MCF 10A (cell line): ENCODE measurements at regions of chr1 and their contacts with region 1.

Region 1: DNA sequence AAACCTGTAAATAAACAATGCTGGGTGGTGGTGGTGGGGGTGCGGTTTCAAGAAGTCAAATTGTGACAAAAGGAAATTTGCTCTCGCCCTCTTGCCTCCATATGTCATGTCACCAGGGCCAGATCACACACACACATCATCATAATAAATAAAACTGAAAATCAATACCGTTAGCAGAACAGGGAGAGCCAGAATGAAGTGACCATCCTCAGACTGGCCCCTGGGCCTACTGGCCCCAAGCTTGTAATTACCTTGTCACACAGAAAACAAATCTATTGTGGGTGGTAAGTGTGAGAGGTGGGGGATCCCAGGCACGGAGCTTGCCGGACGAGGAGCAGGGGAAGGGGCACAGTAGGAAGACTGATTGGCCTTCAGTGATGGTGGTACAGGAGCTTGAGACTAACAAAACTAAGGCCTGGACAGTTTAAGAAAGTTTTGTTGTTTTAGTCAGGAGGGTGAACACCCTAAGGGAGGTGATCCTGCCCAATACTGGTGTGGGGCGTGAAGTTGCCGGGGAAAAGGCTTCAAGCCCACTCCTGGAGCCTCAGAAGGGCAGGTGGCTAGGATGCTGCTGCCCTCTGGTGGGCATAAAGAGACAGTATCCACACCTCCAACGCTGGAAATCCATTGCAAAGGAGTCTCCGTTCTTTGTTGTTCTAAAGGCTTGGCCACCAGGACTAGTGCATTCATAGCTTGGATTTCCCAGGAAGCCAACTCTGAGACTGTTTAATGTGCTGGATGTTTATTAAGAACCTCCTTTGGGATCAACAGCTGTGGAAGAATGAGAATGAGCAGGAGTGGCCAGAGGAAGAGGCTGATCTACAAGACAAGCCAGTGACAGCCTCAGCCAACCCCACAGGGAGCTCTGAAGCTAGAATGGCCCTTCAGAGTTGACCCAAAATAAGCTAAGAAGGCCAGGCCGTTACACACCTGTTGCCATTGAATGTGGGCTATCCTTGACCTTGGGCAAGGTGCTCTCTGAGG is 8.1 kb upstream of the C1orf216 start:
- DNase-seq: peak; percentile 60
- H3K4me3 Mint-ChIP-seq: no peak overlapping the region
- H3K27ac Mint-ChIP-seq: no peak overlapping the region
- H3K4me1 Mint-ChIP-seq: no peaks in the 10 kb centered on the region
- H3K27me3 Mint-ChIP-seq: no peaks in the 10 kb centered on the region
- CTCF ChIP-seq: peak; percentile 86

Region 2: GRCh38 chr1:35202048-35202719 is 524.6 kb before region 1 on chr1:
- CTCF ChIA-PET with region 1: interaction called, 3 read pairs
- POLR2A ChIA-PET with region 1: no interaction called
- intact Hi-C with region 1: loop called (anchors 5 kb)
- DNase-seq: peak; percentile 84
- H3K4me3 Mint-ChIP-seq: no peak overlapping the region
- H3K27ac Mint-ChIP-seq: no peak overlapping the region
- H3K4me1 Mint-ChIP-seq: no peaks in the 10 kb centered on the region
- H3K27me3 Mint-ChIP-seq: no peaks in the 10 kb centered on the region
- CTCF ChIP-seq: peak; percentile 86

Region 3: GRCh38 chr1:35451125-35451528 is 275.6 kb before region 1 on chr1:
- CTCF ChIA-PET with region 1: interaction called, 80 read pairs
- POLR2A ChIA-PET with region 1: interaction called, 3 read pairs
- intact Hi-C with region 1: no loop called
- DNase-seq: peak; percentile 82
- H3K4me3 Mint-ChIP-seq: peak overlapping the region; percentile 0
- H3K27ac Mint-ChIP-seq: no peak overlapping the region
- H3K4me1 Mint-ChIP-seq: peaks cover 19% of the 10 kb centered on the region
- H3K27me3 Mint-ChIP-seq: no peaks in the 10 kb centered on the region
- CTCF ChIP-seq: peak; percentile 83

Region 4: DNA sequence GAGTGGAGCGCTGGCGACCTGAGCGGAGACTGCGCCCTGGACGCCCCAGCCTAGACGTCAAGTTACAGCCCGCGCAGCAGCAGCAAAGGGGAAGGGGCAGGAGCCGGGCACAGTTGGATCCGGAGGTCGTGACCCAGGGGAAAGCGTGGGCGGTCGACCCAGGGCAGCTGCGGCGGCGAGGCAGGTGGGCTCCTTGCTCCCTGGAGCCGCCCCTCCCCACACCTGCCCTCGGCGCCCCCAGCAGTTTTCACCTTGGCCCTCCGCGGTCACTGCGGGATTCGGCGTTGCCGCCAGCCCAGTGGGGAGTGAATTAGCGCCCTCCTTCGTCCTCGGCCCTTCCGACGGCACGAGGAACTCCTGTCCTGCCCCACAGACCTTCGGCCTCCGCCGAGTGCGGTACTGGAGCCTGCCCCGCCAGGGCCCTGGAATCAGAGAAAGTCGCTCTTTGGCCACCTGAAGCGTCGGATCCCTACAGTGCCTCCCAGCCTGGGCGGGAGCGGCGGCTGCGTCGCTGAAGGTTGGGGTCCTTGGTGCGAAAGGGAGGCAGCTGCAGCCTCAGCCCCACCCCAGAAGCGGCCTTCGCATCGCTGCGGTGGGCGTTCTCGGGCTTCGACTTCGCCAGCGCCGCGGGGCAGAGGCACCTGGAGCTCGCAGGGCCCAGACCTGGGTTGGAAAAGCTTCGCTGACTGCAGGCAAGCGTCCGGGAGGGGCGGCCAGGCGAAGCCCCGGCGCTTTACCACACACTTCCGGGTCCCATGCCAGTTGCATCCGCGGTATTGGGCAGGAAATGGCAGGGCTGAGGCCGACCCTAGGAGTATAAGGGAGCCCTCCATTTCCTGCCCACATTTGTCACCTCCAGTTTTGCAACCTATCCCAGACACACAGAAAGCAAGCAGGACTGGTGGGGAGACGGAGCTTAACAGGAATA is 149.4 kb before region 1 on chr1:
- CTCF ChIA-PET with region 1: interaction called, 38 read pairs
- POLR2A ChIA-PET with region 1: no interaction called
- intact Hi-C with region 1: no loop called
- DNase-seq: no peak
- H3K4me3 Mint-ChIP-seq: no peak overlapping the region
- H3K27ac Mint-ChIP-seq: no peak overlapping the region
- H3K4me1 Mint-ChIP-seq: peaks cover 11% of the 10 kb centered on the region
- H3K27me3 Mint-ChIP-seq: peaks cover 4% of the 10 kb centered on the region
- CTCF ChIP-seq: no peak

Region 5: GRCh38 chr1:35641233-35641866 is 85.4 kb before region 1 on chr1 and contains the start of gene PSMB2:
- CTCF ChIA-PET with region 1: interaction called, 14 read pairs
- POLR2A ChIA-PET with region 1: interaction called, 5 read pairs
- intact Hi-C with region 1: no loop called
- DNase-seq: peak; percentile 96
- H3K4me3 Mint-ChIP-seq: peak within 1 kb of the TSS; percentile 99
- H3K27ac Mint-ChIP-seq: peak within 1 kb of the TSS; percentile 100
- H3K4me1 Mint-ChIP-seq: peaks cover 7% of the 10 kb centered on the region
- H3K27me3 Mint-ChIP-seq: peaks cover 12% of the 10 kb centered on the region
- CTCF ChIP-seq: no peak
- total RNA-seq, gene PSMB2: 82.6 and 93.9 TPM in 2 replicates

Region 6: DNA sequence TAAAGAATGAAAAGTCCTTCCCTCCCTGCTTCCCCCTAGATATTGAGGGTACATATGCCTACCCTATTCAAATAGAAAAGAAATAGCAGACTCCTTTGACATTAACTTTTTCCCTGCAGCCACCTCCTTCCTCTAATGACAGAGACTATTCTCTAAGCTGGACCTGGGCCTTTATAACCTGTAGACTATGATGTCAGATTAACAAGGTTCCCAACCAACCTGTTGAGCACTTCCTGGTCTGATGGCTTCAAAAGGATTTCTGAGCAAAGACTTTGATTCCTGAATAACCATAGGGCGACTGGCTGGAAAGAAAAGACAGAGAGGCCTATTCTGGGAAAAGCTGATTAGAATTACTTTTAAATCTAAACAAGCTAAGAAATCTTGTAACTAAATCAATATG is 10.4 kb after region 1 on chr1:
- CTCF ChIA-PET with region 1: interaction called, 68 read pairs
- POLR2A ChIA-PET with region 1: no interaction called
- intact Hi-C with region 1: no loop called
- DNase-seq: no peak
- H3K4me3 Mint-ChIP-seq: no peak overlapping the region
- H3K27ac Mint-ChIP-seq: no peak overlapping the region
- H3K4me1 Mint-ChIP-seq: no peaks in the 10 kb centered on the region
- H3K27me3 Mint-ChIP-seq: no peaks in the 10 kb centered on the region
- CTCF ChIP-seq: no peak

Region 7: GRCh38 chr1:35753626-35754260 is 27.0 kb after region 1 on chr1:
- CTCF ChIA-PET with region 1: interaction called, 59 read pairs
- POLR2A ChIA-PET with region 1: no interaction called
- intact Hi-C with region 1: no loop called
- DNase-seq: no peak
- H3K4me3 Mint-ChIP-seq: no peak overlapping the region
- H3K27ac Mint-ChIP-seq: no peak overlapping the region
- H3K4me1 Mint-ChIP-seq: no peaks in the 10 kb centered on the region
- H3K27me3 Mint-ChIP-seq: no peaks in the 10 kb centered on the region
- CTCF ChIP-seq: no peak

Region 8: GRCh38 chr1:35832276-35832905 is 105.6 kb after region 1 on chr1:
- CTCF ChIA-PET with region 1: no interaction called
- POLR2A ChIA-PET with region 1: no interaction called
- intact Hi-C with region 1: no loop called
- DNase-seq: no peak
- H3K4me3 Mint-ChIP-seq: no peak overlapping the region
- H3K27ac Mint-ChIP-seq: no peak overlapping the region
- H3K4me1 Mint-ChIP-seq: no peaks in the 10 kb centered on the region
- H3K27me3 Mint-ChIP-seq: no peaks in the 10 kb centered on the region
- CTCF ChIP-seq: no peak

Region 9: GRCh38 chr1:35857830-35858229 is 131.1 kb after region 1 on chr1:
- CTCF ChIA-PET with region 1: no interaction called
- POLR2A ChIA-PET with region 1: no interaction called
- intact Hi-C with region 1: no loop called
- DNase-seq: peak; percentile 18
- H3K4me3 Mint-ChIP-seq: no peak overlapping the region
- H3K27ac Mint-ChIP-seq: no peak overlapping the region
- H3K4me1 Mint-ChIP-seq: no peaks in the 10 kb centered on the region
- H3K27me3 Mint-ChIP-seq: no peaks in the 10 kb centered on the region
- CTCF ChIP-seq: no peak